ENCODE measurements at regions of chr9 and their contacts with region 1.

Region 1: GRCh38 chr9:83688921-83689320 is 18.8 kb downstream of the UBQLN1 start:
- DNase-seq: no peak
- H3K4me3 Mint-ChIP-seq: no peak overlapping the region
- H3K27ac Mint-ChIP-seq: peak overlapping the region; percentile 62
- H3K4me1 Mint-ChIP-seq: peaks cover 44% of the 10 kb centered on the region
- H3K27me3 Mint-ChIP-seq: no peaks in the 10 kb centered on the region

Region 2: GRCh38 chr9:83466877-83467276 is 222.0 kb before region 1 on chr9:
- intact Hi-C with region 1: no loop called
- DNase-seq: no peak
- H3K4me3 Mint-ChIP-seq: no peak overlapping the region
- H3K27ac Mint-ChIP-seq: no peak overlapping the region
- H3K4me1 Mint-ChIP-seq: peaks cover 2% of the 10 kb centered on the region
- H3K27me3 Mint-ChIP-seq: peaks cover 36% of the 10 kb centered on the region

Region 3: DNA sequence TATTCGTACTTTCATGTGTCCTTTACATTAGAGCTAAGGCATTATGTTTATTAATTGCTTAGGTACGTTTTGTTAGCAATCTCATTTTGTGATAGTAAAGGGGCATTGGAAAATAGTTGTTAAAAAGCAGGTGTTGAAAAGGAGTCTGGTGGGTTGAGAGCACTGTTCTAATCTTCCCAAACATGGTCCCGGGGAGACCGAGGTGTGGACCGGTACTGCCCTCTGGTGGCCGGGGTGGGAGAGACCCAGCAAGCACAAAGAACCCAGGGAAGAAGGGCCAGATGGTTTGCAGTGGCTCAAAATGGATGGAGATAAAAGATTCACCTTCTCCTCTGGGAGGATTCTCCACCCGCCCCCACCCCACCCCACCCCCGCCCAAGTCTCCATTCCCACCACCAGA is 39.8 kb before region 1 on chr9:
- intact Hi-C with region 1: no loop called
- DNase-seq: peak; percentile 48
- H3K4me3 Mint-ChIP-seq: no peak overlapping the region
- H3K27ac Mint-ChIP-seq: no peak overlapping the region
- H3K4me1 Mint-ChIP-seq: no peaks in the 10 kb centered on the region
- H3K27me3 Mint-ChIP-seq: no peaks in the 10 kb centered on the region

Region 4: GRCh38 chr9:83707768-83708514 is 19.0 kb after region 1 on chr9 and contains the start of gene UBQLN1:
- intact Hi-C with region 1: loop called (anchors 1 kb)
- DNase-seq: peak; percentile 90
- H3K4me3 Mint-ChIP-seq: peak within 1 kb of the TSS; percentile 88
- H3K27ac Mint-ChIP-seq: peak within 1 kb of the TSS; percentile 96
- H3K4me1 Mint-ChIP-seq: peaks cover 27% of the 10 kb centered on the region
- H3K27me3 Mint-ChIP-seq: no peaks in the 10 kb centered on the region
- total RNA-seq, gene UBQLN1: 138 and 140 TPM in 2 replicates

Region 5: GRCh38 chr9:84129529-84130141 is 440.7 kb after region 1 on chr9:
- intact Hi-C with region 1: no loop called
- DNase-seq: no peak
- H3K4me3 Mint-ChIP-seq: no peak overlapping the region
- H3K27ac Mint-ChIP-seq: no peak overlapping the region
- H3K4me1 Mint-ChIP-seq: no peaks in the 10 kb centered on the region
- H3K27me3 Mint-ChIP-seq: peaks cover 12% of the 10 kb centered on the region

Region 6: GRCh38 chr9:84187090-84187489 is 498.2 kb after region 1 on chr9:
- intact Hi-C with region 1: no loop called
- DNase-seq: no peak
- H3K4me3 Mint-ChIP-seq: no peak overlapping the region
- H3K27ac Mint-ChIP-seq: no peak overlapping the region
- H3K4me1 Mint-ChIP-seq: no peaks in the 10 kb centered on the region
- H3K27me3 Mint-ChIP-seq: peaks cover 6% of the 10 kb centered on the region

Measured in activated T-helper 2 cell treated with anti-CD3 and anti-CD28 coated beads, Interferon-gamma antibody, Interleukin-2, Interleukin-4, amounts not matched to agents 10 μg/mL and 5 μg/mL and 100 μg/mL, durations not matched to agents 14 hours and 24 hours and 36 hours (primary cell).